Activated CD4-positive, alpha-beta T cell treated with anti-CD3 and anti-CD28 coated beads for 36 hours (primary cell): ENCODE measurements at regions of chr15 and their contacts with region 1.

Region 1: GRCh38 chr15:44738340-44738984 is 2.1 kb downstream of the TRIM69 start:
- DNase-seq: no peak
- ATAC-seq: no peak
- H3K4me3 Mint-ChIP-seq: peak overlapping the region; percentile 38
- H3K27ac Mint-ChIP-seq: peak overlapping the region; percentile 47
- H3K4me1 Mint-ChIP-seq: peaks cover 47% of the 10 kb centered on the region
- H3K27me3 Mint-ChIP-seq: no peaks in the 10 kb centered on the region

Region 2: GRCh38 chr15:44315126-44315525 is 423.3 kb before region 1 on chr15:
- CTCF ChIA-PET with region 1: no interaction called
- POLR2A ChIA-PET with region 1: no interaction called
- intact Hi-C with region 1: no loop called
- DNase-seq: no peak
- ATAC-seq: no peak
- H3K4me3 Mint-ChIP-seq: no peak overlapping the region
- H3K27ac Mint-ChIP-seq: no peak overlapping the region
- H3K4me1 Mint-ChIP-seq: peaks cover 16% of the 10 kb centered on the region
- H3K27me3 Mint-ChIP-seq: no peaks in the 10 kb centered on the region

Region 3: GRCh38 chr15:44573386-44573785 is 165.1 kb before region 1 on chr15:
- CTCF ChIA-PET with region 1: interaction called, 42 read pairs
- POLR2A ChIA-PET with region 1: no interaction called
- intact Hi-C with region 1: loop called in 1 of 2 experiments (anchors 1 kb)
- DNase-seq: no peak
- ATAC-seq: no peak
- H3K4me3 Mint-ChIP-seq: no peak overlapping the region
- H3K27ac Mint-ChIP-seq: peak overlapping the region; percentile 13
- H3K4me1 Mint-ChIP-seq: peaks cover 2% of the 10 kb centered on the region
- H3K27me3 Mint-ChIP-seq: no peaks in the 10 kb centered on the region

Region 4: GRCh38 chr15:44598892-44599291 is 139.6 kb before region 1 on chr15:
- CTCF ChIA-PET with region 1: interaction called, 113 read pairs
- POLR2A ChIA-PET with region 1: no interaction called
- intact Hi-C with region 1: loop called in 1 of 2 experiments (anchors 5 kb)
- DNase-seq: no peak
- ATAC-seq: no peak
- H3K4me3 Mint-ChIP-seq: no peak overlapping the region
- H3K27ac Mint-ChIP-seq: no peak overlapping the region
- H3K4me1 Mint-ChIP-seq: peaks cover 32% of the 10 kb centered on the region
- H3K27me3 Mint-ChIP-seq: no peaks in the 10 kb centered on the region

Region 5: DNA sequence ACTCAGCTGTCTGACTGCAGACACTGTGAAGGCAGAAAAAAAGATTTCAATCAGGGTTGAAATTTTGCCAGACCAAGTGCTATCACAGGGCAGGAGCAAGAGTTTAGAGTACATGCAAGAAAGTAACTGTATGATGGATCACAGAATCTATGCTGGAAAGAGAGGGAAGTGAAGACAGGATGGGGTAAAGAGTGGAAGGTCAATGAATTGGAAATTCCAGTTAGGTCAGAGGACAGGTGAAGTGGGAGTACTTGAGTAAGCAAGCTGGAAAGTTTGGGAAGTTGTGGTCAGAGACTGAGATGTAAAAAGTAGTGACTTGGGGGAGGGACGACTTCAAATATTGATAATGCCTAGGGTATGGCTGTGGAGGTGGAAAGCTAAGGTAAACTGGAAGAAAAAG is 82.2 kb before region 1 on chr15:
- CTCF ChIA-PET with region 1: interaction called, 13 read pairs
- POLR2A ChIA-PET with region 1: no interaction called
- intact Hi-C with region 1: no loop called
- DNase-seq: no peak
- ATAC-seq: no peak
- H3K4me3 Mint-ChIP-seq: no peak overlapping the region
- H3K27ac Mint-ChIP-seq: peak overlapping the region; percentile 38
- H3K4me1 Mint-ChIP-seq: peaks cover 28% of the 10 kb centered on the region
- H3K27me3 Mint-ChIP-seq: no peaks in the 10 kb centered on the region

Region 6: DNA sequence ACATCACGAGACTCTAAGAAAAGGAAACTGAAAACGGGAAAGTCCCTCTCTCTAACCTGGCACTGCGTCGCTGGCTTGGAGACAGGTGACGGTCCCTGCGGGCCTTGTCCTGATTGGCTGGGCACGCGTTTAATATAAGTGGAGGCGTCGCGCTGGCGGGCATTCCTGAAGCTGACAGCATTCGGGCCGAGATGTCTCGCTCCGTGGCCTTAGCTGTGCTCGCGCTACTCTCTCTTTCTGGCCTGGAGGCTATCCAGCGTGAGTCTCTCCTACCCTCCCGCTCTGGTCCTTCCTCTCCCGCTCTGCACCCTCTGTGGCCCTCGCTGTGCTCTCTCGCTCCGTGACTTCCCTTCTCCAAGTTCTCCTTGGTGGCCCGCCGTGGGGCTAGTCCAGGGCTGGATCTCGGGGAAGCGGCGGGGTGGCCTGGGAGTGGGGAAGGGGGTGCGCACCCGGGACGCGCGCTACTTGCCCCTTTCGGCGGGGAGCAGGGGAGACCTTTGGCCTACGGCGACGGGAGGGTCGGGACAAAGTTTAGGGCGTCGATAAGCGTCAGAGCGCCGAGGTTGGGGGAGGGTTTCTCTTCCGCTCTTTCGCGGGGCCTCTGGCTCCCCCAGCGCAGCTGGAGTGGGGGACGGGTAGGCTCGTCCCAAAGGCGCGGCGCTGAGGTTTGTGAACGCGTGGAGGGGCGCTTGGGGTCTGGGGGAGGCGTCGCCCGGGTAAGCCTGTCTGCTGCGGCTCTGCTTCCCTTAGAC is 26.9 kb before region 1 on chr15 and contains the start of gene B2M:
- CTCF ChIA-PET with region 1: interaction called, 114 read pairs
- POLR2A ChIA-PET with region 1: interaction called, 474 read pairs
- intact Hi-C with region 1: no loop called
- DNase-seq: peak; percentile 97
- ATAC-seq: peak; percentile 78
- H3K4me3 Mint-ChIP-seq: peak within 1 kb of the TSS; percentile 96
- H3K27ac Mint-ChIP-seq: peak within 1 kb of the TSS; percentile 100
- H3K4me1 Mint-ChIP-seq: peaks cover 34% of the 10 kb centered on the region
- H3K27me3 Mint-ChIP-seq: no peaks in the 10 kb centered on the region
- total RNA-seq, gene B2M: 5,181 to 7,416 TPM

Region 7: DNA sequence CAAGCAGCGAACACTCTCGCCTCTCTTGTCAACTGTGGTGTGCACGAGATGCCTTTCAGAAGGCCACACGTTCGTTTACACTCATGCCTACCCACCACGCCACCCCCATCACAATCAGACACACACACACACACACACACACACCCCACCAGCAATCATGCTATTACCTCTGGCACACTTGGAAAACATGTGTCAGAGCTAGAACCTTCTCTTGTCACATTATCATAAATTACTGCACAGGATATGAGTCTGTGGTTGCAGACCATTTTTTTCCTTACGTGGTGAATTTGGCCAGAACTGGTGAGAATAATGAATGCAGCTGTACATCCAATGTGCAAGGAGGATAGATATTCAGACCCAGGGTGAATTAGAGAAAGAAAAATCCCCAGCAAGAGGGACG is 50.3 kb after region 1 on chr15:
- CTCF ChIA-PET with region 1: interaction called, 13 read pairs
- POLR2A ChIA-PET with region 1: no interaction called
- intact Hi-C with region 1: no loop called
- DNase-seq: peak; percentile 76
- ATAC-seq: peak; percentile 86
- H3K4me3 Mint-ChIP-seq: no peak overlapping the region
- H3K27ac Mint-ChIP-seq: peak overlapping the region; percentile 79
- H3K4me1 Mint-ChIP-seq: peaks cover 29% of the 10 kb centered on the region
- H3K27me3 Mint-ChIP-seq: no peaks in the 10 kb centered on the region

Region 8: GRCh38 chr15:45179221-45179985 is 440.9 kb after region 1 on chr15:
- CTCF ChIA-PET with region 1: no interaction called
- POLR2A ChIA-PET with region 1: no interaction called
- intact Hi-C with region 1: no loop called
- DNase-seq: peak; percentile 68
- ATAC-seq: peak; percentile 63
- H3K4me3 Mint-ChIP-seq: no peak overlapping the region
- H3K27ac Mint-ChIP-seq: no peak overlapping the region
- H3K4me1 Mint-ChIP-seq: peaks cover 13% of the 10 kb centered on the region
- H3K27me3 Mint-ChIP-seq: no peaks in the 10 kb centered on the region